Activated B cell treated with CpG ODN at 0.5 μM for 24 hours (primary cell): ENCODE measurements at regions of chr4 and their contacts with region 1.

Region 1: DNA sequence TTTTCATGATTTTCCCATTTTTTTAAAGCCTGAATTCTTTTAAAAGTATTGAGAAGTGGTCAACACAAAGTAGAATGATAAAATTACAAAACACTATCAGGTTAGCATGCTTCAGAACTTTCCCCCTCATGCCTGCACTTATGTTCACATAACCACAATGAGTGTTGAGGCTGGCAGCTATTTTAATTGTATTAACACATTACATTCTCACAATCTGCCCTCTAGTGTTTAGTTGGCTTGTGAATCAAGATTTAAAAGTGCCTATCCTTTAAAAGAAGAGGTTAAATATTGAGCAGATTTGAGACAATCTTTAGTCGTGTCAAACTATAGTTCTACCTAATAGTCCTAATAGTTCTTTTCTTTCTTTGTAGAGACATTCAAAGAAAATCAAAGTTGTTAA is 93.6 kb upstream of the NAP1L5 start:
- DNase-seq: no peak
- ATAC-seq: no peak
- H3K4me3 Mint-ChIP-seq: no peak overlapping the region
- H3K27ac Mint-ChIP-seq: no peak overlapping the region
- H3K4me1 Mint-ChIP-seq: no peaks in the 10 kb centered on the region
- H3K27me3 Mint-ChIP-seq: no peaks in the 10 kb centered on the region
- CTCF ChIP-seq: no peak

Region 2: DNA sequence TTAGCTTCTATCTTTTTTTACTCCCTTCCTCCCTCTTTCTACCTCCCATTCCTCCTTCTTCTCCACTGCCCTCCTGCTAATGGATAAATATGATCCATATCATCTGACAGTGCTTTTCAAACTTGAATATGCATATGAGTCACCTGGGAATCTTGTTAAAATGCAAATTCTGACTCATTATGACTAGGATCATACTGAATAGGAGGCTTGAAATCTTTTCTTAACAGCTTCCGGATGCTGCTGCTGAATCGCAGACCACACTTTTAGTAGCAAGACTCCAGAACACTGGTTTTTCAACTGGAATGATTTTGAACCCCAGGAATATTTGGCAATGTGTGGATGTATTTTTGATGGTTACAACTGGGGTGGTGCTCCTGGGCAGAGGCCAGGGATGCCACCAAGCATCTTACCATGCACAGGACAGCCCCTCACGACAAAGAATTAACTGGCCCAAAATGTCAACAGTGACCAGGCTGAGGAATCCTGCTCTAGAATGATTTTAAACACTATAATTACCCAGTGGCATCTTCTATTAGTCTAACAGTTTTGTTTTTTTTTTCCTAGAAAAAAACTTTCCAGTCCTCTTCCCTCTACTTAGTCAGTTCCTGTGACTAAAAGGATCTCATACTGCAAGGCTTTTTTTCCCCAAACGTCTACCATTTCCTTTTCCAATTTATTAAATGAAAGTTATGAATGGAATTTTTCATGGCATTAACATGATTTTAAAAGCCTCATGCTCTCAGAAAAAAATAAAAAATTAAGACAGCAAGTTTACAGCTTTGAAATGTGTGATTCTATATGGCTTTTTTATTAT is 257.1 kb before region 1 on chr4:
- CTCF ChIA-PET with region 1: interaction called, 4 read pairs
- POLR2A ChIA-PET with region 1: no interaction called
- intact Hi-C with region 1: loop called (anchors 1 kb)
- DNase-seq: no peak
- ATAC-seq: no peak
- H3K4me3 Mint-ChIP-seq: no peak overlapping the region
- H3K27ac Mint-ChIP-seq: no peak overlapping the region
- H3K4me1 Mint-ChIP-seq: no peaks in the 10 kb centered on the region
- H3K27me3 Mint-ChIP-seq: no peaks in the 10 kb centered on the region
- CTCF ChIP-seq: no peak

Region 3: DNA sequence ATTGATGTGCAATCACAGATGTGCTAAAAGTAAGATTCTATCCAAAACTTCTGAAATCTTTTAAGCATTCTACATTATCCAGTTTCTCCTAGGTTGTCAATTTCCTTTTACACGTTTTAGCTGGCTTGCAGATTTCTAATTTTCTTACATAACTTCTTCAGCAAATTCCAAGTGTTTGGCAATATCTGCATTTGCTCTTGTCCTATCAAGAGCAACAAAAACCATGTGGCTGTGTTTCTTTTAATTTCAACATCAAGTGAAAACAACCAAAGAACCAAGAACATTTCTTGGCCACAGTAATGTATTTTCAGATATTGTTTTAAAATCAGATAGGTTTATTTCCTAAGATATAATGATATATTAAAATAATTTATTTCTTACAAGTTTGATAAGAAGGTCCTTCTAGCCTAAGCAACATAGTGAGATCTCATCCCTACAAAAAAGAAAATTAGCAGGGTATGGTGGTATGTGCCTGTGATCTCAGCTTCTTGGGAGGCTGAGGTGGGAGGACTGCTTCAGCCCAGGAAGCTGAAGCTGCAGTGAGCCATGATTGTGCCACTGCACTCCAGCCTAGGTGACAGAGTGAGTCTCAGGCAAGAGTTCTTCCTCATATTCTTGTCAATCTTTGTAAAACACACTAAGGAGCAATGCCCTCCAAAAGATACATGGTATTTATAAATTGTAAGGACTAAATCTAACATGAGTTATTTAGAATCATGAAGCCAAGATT is 37.7 kb after region 1 on chr4:
- CTCF ChIA-PET with region 1: no interaction called
- POLR2A ChIA-PET with region 1: no interaction called
- intact Hi-C with region 1: no loop called
- DNase-seq: no peak
- ATAC-seq: no peak
- H3K4me3 Mint-ChIP-seq: no peak overlapping the region
- H3K27ac Mint-ChIP-seq: no peak overlapping the region
- H3K4me1 Mint-ChIP-seq: no peaks in the 10 kb centered on the region
- H3K27me3 Mint-ChIP-seq: peaks cover 8% of the 10 kb centered on the region
- CTCF ChIP-seq: no peak